ENCODE measurements at regions of chr1 and their contacts with region 1.

Region 1: DNA sequence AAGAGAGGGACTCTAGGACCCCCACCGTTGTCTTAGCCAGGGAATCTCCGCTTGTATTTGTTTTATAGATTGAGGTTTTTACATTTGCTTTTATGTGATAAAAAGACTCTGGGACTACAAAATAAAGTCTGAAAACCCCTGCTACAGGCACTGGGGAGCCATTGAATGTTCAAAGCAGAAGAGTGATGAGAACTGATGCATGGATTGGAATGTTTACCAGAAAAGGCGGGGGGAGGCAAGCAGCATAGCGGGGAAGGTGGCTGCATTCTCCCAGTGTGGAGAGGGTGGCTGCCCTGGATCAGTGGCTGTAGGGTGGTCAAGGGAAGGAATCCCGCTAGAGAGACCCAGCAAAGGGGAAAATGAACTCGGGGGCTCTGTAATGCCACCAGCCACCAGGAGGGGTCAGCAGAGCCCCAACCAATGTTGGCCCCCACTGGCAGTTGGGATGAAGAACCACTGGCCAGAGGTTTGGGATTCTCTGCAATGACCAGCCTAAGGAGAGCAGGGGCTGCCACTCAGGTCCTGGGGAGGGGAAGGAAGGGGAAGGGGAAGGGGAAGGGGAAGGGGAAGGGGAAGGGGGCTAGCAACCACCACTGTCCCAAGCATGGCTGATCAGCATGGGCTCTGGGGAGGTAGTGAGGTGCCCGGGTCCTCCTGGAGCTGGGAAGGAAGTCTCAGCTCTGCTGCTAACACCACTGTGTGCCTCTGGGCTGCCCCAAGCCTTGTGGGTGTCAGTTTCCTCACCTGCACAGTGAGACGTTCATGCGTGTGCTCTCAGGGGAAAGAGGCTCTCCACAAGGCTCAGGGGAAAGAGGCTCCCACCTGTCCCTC is 19.2 kb upstream of the PEF1 start:
- DNase-seq: peak; percentile 30 to 74
- ATAC-seq: peak; percentile 49 to 66; a peak in 5 of 6 replicates
- H3K4me3 ChIP-seq: no peak overlapping the region
- H3K27ac ChIP-seq: peak overlapping the region in 1 of 2 experiments; percentile 91; a peak in 3 of 6 replicates
- H3K4me1 ChIP-seq: peaks cover 33% of the 10 kb centered on the region
- CTCF ChIP-seq: peak; percentile 76
- EP300 ChIP-seq: no peak
- POLR2A ChIP-seq: no peak
- RAD21 ChIP-seq: peak; percentile 95 to 96

Region 2: GRCh38 chr1:31733389-31734219 is 69.8 kb after region 1 on chr1:
- CTCF ChIA-PET with region 1: interaction called, 102 read pairs
- POLR2A ChIA-PET with region 1: no interaction called
- DNase-seq: no peak
- ATAC-seq: no peak; a peak in 1 of 6 replicates
- H3K4me3 ChIP-seq: no peak overlapping the region
- H3K27ac ChIP-seq: no peak overlapping the region
- H3K4me1 ChIP-seq: no peaks in the 10 kb centered on the region
- CTCF ChIP-seq: no peak
- EP300 ChIP-seq: no peak
- POLR2A ChIP-seq: no peak
- RAD21 ChIP-seq: no peak